ENCODE measurements at regions of chr6 and their contacts with region 1.

Region 1: GRCh38 chr6:31862344-31863227 is at the start of gene NEU1:
- DNase-seq: peak; percentile 87 to 100 (median 99)
- ATAC-seq: peak; percentile 97
- H3K4me3 ChIP-seq: peak within 1 kb of the TSS; percentile 97
- H3K4me3 Mint-ChIP-seq: peak within 1 kb of the TSS; percentile 87 to 96 (median 93)
- H3K27ac ChIP-seq: peak within 1 kb of the TSS; percentile 86
- H3K27ac Mint-ChIP-seq: peak within 1 kb of the TSS; percentile 85 to 97 (median 93)
- H3K4me1 ChIP-seq: peaks cover 8 to 15% of the 10 kb centered on the region in 2 donors
- H3K4me1 Mint-ChIP-seq: peaks cover 14 to 29% (median 20%) of the 10 kb centered on the region in 7 donors
- H3K27me3 ChIP-seq: no peaks in the 10 kb centered on the region
- H3K27me3 Mint-ChIP-seq: peaks cover 0 to 2% (median 0%) of the 10 kb centered on the region in 5 donors
- total RNA-seq, gene NEU1: 18.6 to 35.0 (median 20.1) TPM

Region 2: GRCh38 chr6:31158140-31158862 is 704.3 kb before region 1 on chr6 and contains the start of gene TCF19:
- CTCF ChIA-PET with region 1: no interaction called
- POLR2A ChIA-PET with region 1: no interaction called
- intact Hi-C with region 1: loop called in 1 of 2 experiments (anchors 5 kb)
- DNase-seq: peak; percentile 97 to 99 (median 98)
- ATAC-seq: peak; percentile 96
- H3K4me3 ChIP-seq: peak within 1 kb of the TSS; percentile 82
- H3K4me3 Mint-ChIP-seq: peak within 1 kb of the TSS; percentile 82 to 97 (median 91)
- H3K27ac ChIP-seq: peak within 1 kb of the TSS; percentile 82
- H3K27ac Mint-ChIP-seq: peak within 1 kb of the TSS; percentile 62 to 96 (median 89)
- H3K4me1 ChIP-seq: peaks cover 12 to 18% of the 10 kb centered on the region in 2 donors
- H3K4me1 Mint-ChIP-seq: peaks cover 21 to 56% (median 29%) of the 10 kb centered on the region in 7 donors
- H3K27me3 ChIP-seq: no peaks in the 10 kb centered on the region
- H3K27me3 Mint-ChIP-seq: peaks cover 0 to 2% (median 0%) of the 10 kb centered on the region in 5 donors
- total RNA-seq, gene TCF19: 4.3 to 78.9 (median 9.4) TPM

Region 3: DNA sequence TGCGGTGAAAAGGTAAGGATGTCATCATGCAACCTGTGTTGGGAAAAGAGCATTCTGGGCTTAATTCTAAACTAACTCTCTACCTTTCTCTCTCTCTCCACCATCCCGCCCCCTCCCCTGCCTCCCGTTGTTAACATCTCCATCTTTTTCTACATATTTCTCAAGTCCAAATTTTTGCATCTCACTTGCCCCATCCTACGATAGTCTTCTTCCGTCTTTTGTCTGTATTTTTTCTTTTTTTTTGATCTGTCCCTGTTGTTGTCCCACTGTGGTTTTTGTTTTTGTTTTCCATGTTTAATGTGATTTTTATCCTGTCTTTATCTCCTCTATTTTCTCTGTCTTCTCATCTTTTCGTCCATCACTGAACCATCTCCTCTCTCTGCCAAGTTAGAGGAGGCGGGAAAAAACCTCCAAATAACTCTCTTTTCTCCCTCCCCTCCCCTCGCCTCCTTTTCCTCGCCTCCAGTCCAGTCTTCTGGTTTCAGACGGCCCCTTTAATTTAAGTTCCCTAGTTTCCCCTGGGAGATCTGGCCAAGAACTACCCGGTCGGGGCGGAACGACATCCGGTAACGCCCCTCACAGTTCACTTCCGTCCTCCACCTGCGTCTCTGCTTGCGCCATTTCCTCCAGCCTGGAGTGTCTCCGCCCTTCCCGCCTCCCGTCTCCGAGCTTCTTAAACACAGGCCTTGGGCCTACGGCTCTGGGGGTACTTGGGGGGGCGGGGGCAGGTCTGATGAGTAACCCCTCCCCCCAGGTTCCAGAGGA is 315.4 kb before region 1 on chr6 and contains the start of gene NFKBIL1:
- CTCF ChIA-PET with region 1: interaction called, 5 read pairs
- POLR2A ChIA-PET with region 1: no interaction called
- intact Hi-C with region 1: loop called (anchors 1 kb)
- DNase-seq: peak; percentile 53 to 90 (median 84)
- ATAC-seq: peak; percentile 91
- H3K4me3 ChIP-seq: peak within 1 kb of the TSS; percentile 68
- H3K4me3 Mint-ChIP-seq: peak within 1 kb of the TSS; percentile 81 to 97 (median 91)
- H3K27ac ChIP-seq: peak within 1 kb of the TSS; percentile 89
- H3K27ac Mint-ChIP-seq: peak within 1 kb of the TSS; percentile 78 to 98 (median 95)
- H3K4me1 ChIP-seq: peaks cover 22 to 31% of the 10 kb centered on the region in 2 donors
- H3K4me1 Mint-ChIP-seq: peaks cover 22 to 57% (median 48%) of the 10 kb centered on the region in 7 donors
- H3K27me3 ChIP-seq: no peaks in the 10 kb centered on the region
- H3K27me3 Mint-ChIP-seq: no peaks in the 10 kb centered on the region
- total RNA-seq, gene NFKBIL1: 8.7 to 17.2 (median 11.6) TPM

Region 4: DNA sequence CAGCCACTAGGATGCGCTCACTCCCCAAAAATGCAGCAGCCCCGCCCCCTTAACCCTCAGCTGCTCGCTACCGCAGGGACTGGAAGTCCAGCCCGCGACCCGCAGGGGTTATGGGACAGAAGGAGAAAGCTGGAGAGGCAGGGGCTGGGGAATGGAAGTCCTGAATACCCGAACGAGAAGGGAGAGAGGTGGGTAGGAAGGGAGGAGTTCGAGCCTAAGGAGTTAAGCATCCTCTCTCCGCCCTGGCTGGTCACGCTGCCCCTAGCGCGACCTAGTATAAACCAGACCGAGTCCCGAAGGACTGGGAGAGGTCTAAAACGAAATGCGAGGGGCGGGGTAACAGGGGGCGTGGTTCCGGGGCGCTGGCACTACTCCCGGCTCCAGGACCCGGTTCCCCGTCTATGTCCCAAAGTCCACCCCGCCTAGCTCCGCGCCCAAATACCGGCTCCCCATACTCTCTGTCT is 133.0 kb before region 1 on chr6:
- CTCF ChIA-PET with region 1: no interaction called
- POLR2A ChIA-PET with region 1: interaction called, 3 read pairs
- intact Hi-C with region 1: loop called in 1 of 2 experiments (anchors 1 kb)
- DNase-seq: peak; percentile 66 to 82 (median 77)
- ATAC-seq: peak; percentile 78
- H3K4me3 ChIP-seq: peak overlapping the region; percentile 92
- H3K4me3 Mint-ChIP-seq: peak overlapping the region; percentile 83 to 100 (median 97)
- H3K27ac ChIP-seq: peak overlapping the region; percentile 65
- H3K27ac Mint-ChIP-seq: peak overlapping the region; percentile 78 to 96 (median 89)
- H3K4me1 ChIP-seq: peaks cover 18 to 20% of the 10 kb centered on the region in 2 donors
- H3K4me1 Mint-ChIP-seq: peaks cover 20 to 65% (median 55%) of the 10 kb centered on the region in 7 donors
- H3K27me3 ChIP-seq: no peaks in the 10 kb centered on the region
- H3K27me3 Mint-ChIP-seq: no peaks in the 10 kb centered on the region

Region 5: GRCh38 chr6:31784098-31784925 is 78.3 kb before region 1 on chr6:
- CTCF ChIA-PET with region 1: no interaction called
- POLR2A ChIA-PET with region 1: no interaction called
- intact Hi-C with region 1: no loop called
- DNase-seq: no peak
- ATAC-seq: no peak
- H3K4me3 ChIP-seq: no peak overlapping the region
- H3K4me3 Mint-ChIP-seq: no peak overlapping the region
- H3K27ac ChIP-seq: no peak overlapping the region
- H3K27ac Mint-ChIP-seq: peak overlapping the region in 2 of 9 donors; percentile 28 to 55
- H3K4me1 ChIP-seq: no peaks in the 10 kb centered on the region
- H3K4me1 Mint-ChIP-seq: peaks cover 0 to 2% (median 0%) of the 10 kb centered on the region in 7 donors
- H3K27me3 ChIP-seq: no peaks in the 10 kb centered on the region
- H3K27me3 Mint-ChIP-seq: no peaks in the 10 kb centered on the region

Region 6: GRCh38 chr6:31834434-31835198 is 28.0 kb before region 1 on chr6:
- CTCF ChIA-PET with region 1: interaction called, 7 read pairs
- POLR2A ChIA-PET with region 1: interaction called, 21 read pairs
- intact Hi-C with region 1: loop called (anchors 1 kb)
- DNase-seq: peak; percentile 77 to 84 (median 82)
- ATAC-seq: peak; percentile 82
- H3K4me3 ChIP-seq: peak overlapping the region; percentile 73
- H3K4me3 Mint-ChIP-seq: peak overlapping the region; percentile 84 to 99 (median 99)
- H3K27ac ChIP-seq: peak overlapping the region; percentile 92
- H3K27ac Mint-ChIP-seq: peak overlapping the region; percentile 91 to 100 (median 99)
- H3K4me1 ChIP-seq: peaks cover 40 to 48% of the 10 kb centered on the region in 2 donors
- H3K4me1 Mint-ChIP-seq: peaks cover 31 to 64% (median 53%) of the 10 kb centered on the region in 7 donors
- H3K27me3 ChIP-seq: no peaks in the 10 kb centered on the region
- H3K27me3 Mint-ChIP-seq: no peaks in the 10 kb centered on the region

Region 7: DNA sequence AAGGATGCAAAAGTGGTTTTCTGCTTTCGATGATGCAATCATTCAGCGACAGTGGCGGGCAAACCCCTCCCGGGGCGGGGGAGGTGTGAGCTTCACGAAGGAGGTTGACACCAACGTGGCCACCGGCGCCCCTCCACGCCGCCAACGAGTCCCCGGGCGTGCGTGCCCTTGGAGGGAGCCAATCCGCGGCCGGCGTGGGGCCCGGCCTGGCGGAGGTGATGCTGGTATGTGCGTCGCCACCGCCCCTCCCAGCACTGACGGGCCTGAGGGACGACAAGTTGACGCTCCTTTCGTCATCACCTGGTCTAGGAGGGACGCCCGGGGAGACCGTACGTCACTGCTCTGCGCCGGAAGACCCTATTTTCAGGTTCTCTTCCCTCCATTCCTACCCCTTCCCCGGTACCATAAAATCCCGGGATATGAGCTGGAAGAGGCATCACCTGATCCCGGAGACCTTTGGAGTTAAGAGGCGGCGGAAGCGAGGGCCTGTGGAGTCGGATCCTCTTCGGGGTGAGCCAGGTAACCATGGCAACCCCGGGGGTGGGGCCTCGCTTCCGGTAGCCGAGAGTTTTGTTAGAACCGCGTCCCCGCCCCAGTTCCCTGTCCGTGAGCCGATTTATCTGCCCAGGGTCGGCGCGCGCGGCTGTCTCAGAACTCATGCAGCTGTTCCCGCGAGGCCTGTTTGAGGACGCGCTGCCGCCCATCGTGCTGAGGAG is 109.6 kb after region 1 on chr6 and contains the start of gene DXO:
- CTCF ChIA-PET with region 1: no interaction called
- POLR2A ChIA-PET with region 1: no interaction called
- intact Hi-C with region 1: loop called in 1 of 2 experiments (anchors 10 kb)
- DNase-seq: peak; percentile 95 to 100 (median 99)
- ATAC-seq: peak; percentile 94
- H3K4me3 ChIP-seq: peak within 1 kb of the TSS; percentile 90
- H3K4me3 Mint-ChIP-seq: peak within 1 kb of the TSS; percentile 86 to 99 (median 99)
- H3K27ac ChIP-seq: peak within 1 kb of the TSS; percentile 97
- H3K27ac Mint-ChIP-seq: peak within 1 kb of the TSS; percentile 97 to 100 (median 100)
- H3K4me1 ChIP-seq: peaks cover 21 to 22% of the 10 kb centered on the region in 2 donors
- H3K4me1 Mint-ChIP-seq: peaks cover 20 to 51% (median 42%) of the 10 kb centered on the region in 7 donors
- H3K27me3 ChIP-seq: no peaks in the 10 kb centered on the region
- H3K27me3 Mint-ChIP-seq: peaks cover 0 to 5% (median 0%) of the 10 kb centered on the region in 5 donors
- total RNA-seq, gene DXO: 19.3 to 44.3 (median 35.0) TPM